Activated T-helper 1 cell treated with anti-CD3 and anti-CD28 coated beads, Interleukin-12 subunit alpha, Interleukin-12 subunit beta, Interleukin-2, Interleukin-4 antibody, amounts not matched to agents 30 ng/mL and 10 ng/mL and 1 ng/mL, durations not matched to agents 14 hours and 24 hours and 36 hours (primary cell): ENCODE measurements at regions of chr3 and their contacts with region 1.

Region 1: GRCh38 chr3:67357610-67358458 is 296.6 kb downstream of the SUCLG2 start:
- DNase-seq: no peak
- H3K4me3 Mint-ChIP-seq: no peak overlapping the region
- H3K27ac Mint-ChIP-seq: no peak overlapping the region
- H3K4me1 Mint-ChIP-seq: peaks cover 20% of the 10 kb centered on the region
- H3K27me3 Mint-ChIP-seq: no peaks in the 10 kb centered on the region

Region 2: GRCh38 chr3:67145738-67146137 is 212.1 kb before region 1 on chr3:
- intact Hi-C with region 1: no loop called
- DNase-seq: no peak
- H3K4me3 Mint-ChIP-seq: no peak overlapping the region
- H3K27ac Mint-ChIP-seq: no peak overlapping the region
- H3K4me1 Mint-ChIP-seq: no peaks in the 10 kb centered on the region
- H3K27me3 Mint-ChIP-seq: peaks cover 2% of the 10 kb centered on the region

Region 3: GRCh38 chr3:68057637-68058320 is 699.9 kb after region 1 on chr3:
- intact Hi-C with region 1: loop called (anchors 10 kb)
- DNase-seq: peak; percentile 66
- H3K4me3 Mint-ChIP-seq: peak overlapping the region; percentile 54
- H3K27ac Mint-ChIP-seq: peak overlapping the region; percentile 76
- H3K4me1 Mint-ChIP-seq: peaks cover 59% of the 10 kb centered on the region
- H3K27me3 Mint-ChIP-seq: no peaks in the 10 kb centered on the region

Region 4: GRCh38 chr3:68121287-68121686 is 763.5 kb after region 1 on chr3:
- intact Hi-C with region 1: no loop called
- DNase-seq: no peak
- H3K4me3 Mint-ChIP-seq: no peak overlapping the region
- H3K27ac Mint-ChIP-seq: no peak overlapping the region
- H3K4me1 Mint-ChIP-seq: no peaks in the 10 kb centered on the region
- H3K27me3 Mint-ChIP-seq: no peaks in the 10 kb centered on the region